ENCODE measurements at regions of chr5 and their contacts with region 1.

Region 1: DNA sequence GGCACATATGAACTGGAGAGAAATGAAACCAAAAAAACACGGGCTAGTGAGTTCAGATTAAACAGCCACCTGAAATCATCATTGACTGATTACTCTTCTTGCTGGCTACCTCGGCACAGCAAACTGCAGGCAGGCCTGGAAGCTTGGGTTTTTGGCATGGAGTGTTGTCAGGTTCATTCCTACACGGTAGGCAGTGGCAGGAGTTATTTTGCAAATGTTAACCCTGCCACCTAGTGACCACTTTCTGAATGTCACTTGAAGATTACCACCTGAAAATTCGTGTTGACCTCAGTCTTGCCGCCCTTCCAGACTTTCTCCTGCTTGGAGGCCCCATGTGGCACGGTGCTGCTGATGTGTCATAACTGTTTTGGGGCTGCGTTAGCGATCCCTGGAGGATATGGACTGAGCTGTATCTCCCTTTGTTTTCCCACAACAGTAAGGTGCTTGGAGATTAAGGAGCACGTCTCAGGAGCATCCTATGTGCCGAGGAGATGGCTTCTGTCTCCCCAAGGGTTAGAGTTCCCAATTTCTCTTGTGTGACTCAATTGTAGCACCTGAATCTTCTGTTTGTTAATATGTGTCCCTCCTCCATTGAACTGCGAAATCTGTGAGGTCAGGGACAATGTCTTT is 12.7 kb upstream of the CD180 start:
- DNase-seq: peak; percentile 69 to 78 (median 74)
- H3K4me3 ChIP-seq: no peak overlapping the region
- H3K4me3 Mint-ChIP-seq: peak overlapping the region in 4 of 8 donors; percentile 38 to 63 (median 61)
- H3K27ac ChIP-seq: no peak overlapping the region
- H3K27ac Mint-ChIP-seq: peak overlapping the region; percentile 72 to 93 (median 83)
- H3K4me1 ChIP-seq: peaks cover 55% of the 10 kb centered on the region
- H3K4me1 Mint-ChIP-seq: peaks cover 54 to 62% (median 58%) of the 10 kb centered on the region in 4 donors
- H3K27me3 ChIP-seq: no peaks in the 10 kb centered on the region
- H3K27me3 Mint-ChIP-seq: no peaks in the 10 kb centered on the region

Region 2: GRCh38 chr5:65364907-65365306 is 1844.3 kb before region 1 on chr5:
- CTCF ChIA-PET with region 1: no interaction called
- POLR2A ChIA-PET with region 1: no interaction called
- intact Hi-C with region 1: no loop called
- DNase-seq: no peak
- H3K4me3 ChIP-seq: no peak overlapping the region
- H3K4me3 Mint-ChIP-seq: no peak overlapping the region
- H3K27ac ChIP-seq: no peak overlapping the region
- H3K27ac Mint-ChIP-seq: no peak overlapping the region
- H3K4me1 ChIP-seq: no peaks in the 10 kb centered on the region
- H3K4me1 Mint-ChIP-seq: no peaks in the 10 kb centered on the region
- H3K27me3 ChIP-seq: no peaks in the 10 kb centered on the region
- H3K27me3 Mint-ChIP-seq: no peaks in the 10 kb centered on the region

Region 3: GRCh38 chr5:66171349-66172344 is 1037.6 kb before region 1 on chr5:
- CTCF ChIA-PET with region 1: no interaction called
- POLR2A ChIA-PET with region 1: no interaction called
- intact Hi-C with region 1: loop called (anchors 2 kb)
- DNase-seq: peak; percentile 68 to 81 (median 78)
- H3K4me3 ChIP-seq: no peak overlapping the region
- H3K4me3 Mint-ChIP-seq: peak overlapping the region in 3 of 8 donors; percentile 18 to 53 (median 26)
- H3K27ac ChIP-seq: peak overlapping the region; percentile 43
- H3K27ac Mint-ChIP-seq: peak overlapping the region; percentile 86 to 96 (median 90)
- H3K4me1 ChIP-seq: peaks cover 14% of the 10 kb centered on the region
- H3K4me1 Mint-ChIP-seq: peaks cover 18 to 33% (median 20%) of the 10 kb centered on the region in 4 donors
- H3K27me3 ChIP-seq: no peaks in the 10 kb centered on the region
- H3K27me3 Mint-ChIP-seq: no peaks in the 10 kb centered on the region

Region 4: DNA sequence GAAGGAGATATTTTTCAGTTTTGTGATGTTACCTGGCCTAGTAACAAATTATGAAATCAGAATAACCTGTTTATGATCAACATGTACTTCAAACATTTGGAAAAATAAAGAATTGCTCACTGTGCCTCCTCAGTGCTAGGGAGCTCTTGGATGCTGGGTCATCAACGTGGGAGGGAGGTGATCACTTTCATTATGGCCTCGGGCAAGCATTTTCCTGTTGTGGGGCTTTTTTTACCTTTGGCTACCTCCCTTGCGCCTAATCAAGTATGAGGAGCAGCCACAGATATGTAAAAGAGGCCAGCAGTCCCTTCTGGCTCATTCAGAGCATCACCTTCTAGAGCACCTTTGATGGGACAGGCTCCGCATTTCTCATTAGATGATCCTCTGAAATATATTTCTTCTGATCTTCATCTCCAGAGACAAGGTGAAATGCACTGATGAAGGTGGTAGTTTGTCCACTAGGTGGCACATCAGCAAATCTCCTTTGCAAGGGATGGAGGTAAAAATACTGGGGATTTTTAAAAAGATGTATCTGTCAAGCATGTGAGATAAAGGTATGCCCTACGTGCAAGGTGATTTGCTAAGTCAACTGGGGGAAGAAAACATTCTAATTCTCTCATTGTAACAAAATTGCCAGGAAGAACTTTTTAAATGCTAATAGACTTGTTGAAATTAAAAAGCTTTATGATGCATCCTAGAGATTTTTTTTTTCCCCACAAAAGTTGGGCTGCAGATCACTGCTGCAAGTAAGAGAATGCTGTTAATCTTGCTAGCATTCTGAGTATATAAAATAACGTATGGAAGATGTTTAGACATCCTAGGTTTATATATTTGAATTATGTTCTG is 394.9 kb before region 1 on chr5:
- CTCF ChIA-PET with region 1: interaction called, 9 read pairs
- POLR2A ChIA-PET with region 1: no interaction called
- intact Hi-C with region 1: loop called (anchors 1 kb)
- DNase-seq: peak in 4 of 5 donors; percentile 42 to 51 (median 47)
- H3K4me3 ChIP-seq: no peak overlapping the region
- H3K4me3 Mint-ChIP-seq: peak overlapping the region in 2 of 8 donors; percentile 22 to 27
- H3K27ac ChIP-seq: no peak overlapping the region
- H3K27ac Mint-ChIP-seq: no peak overlapping the region
- H3K4me1 ChIP-seq: no peaks in the 10 kb centered on the region
- H3K4me1 Mint-ChIP-seq: peaks cover 0 to 9% (median 2%) of the 10 kb centered on the region in 4 donors
- H3K27me3 ChIP-seq: no peaks in the 10 kb centered on the region
- H3K27me3 Mint-ChIP-seq: peaks cover 5 to 8% of the 10 kb centered on the region in 2 donors

Region 5: DNA sequence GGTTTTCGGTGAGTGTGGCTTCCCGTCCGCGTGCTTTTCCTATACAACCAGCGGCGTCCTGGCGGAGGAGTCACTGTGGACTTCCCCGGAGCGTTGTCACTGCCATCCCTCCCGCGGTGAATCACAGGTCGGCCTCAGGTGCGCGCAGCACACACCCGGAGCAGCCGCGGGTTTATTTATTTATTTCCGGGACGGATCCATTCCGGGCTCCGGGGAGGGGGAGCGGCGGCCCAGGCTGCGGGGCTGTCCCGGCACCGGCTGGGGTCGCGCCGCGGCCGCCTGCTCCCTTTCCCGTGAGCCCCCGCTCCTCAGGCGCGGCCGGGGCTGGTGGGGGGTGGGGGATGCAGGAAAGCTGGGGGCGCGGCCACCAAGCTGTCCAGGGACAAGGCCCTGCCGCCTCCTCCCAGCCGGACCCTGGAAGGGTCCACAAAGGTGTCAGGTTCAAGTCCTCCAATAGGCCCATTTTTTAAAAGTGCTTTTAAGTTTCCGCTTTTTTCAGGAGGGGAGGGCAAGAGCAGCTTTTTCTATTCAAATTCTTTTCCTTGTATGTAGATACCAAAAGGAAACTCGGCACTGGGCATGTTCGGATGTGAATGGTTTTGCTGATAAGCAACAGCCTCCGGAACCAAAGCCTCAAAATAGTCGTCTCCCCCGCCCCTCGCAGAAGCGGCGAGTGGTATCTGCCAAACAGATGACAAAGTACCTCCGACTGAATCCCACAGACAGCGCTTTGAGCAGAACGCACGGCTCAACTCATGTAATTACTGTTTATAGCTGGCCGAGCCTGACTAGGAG is 205.1 kb before region 1 on chr5:
- CTCF ChIA-PET with region 1: interaction called, 3 read pairs
- POLR2A ChIA-PET with region 1: interaction called, 8 read pairs
- intact Hi-C with region 1: loop called (anchors 1 kb)
- DNase-seq: peak; percentile 88 to 96 (median 90)
- H3K4me3 ChIP-seq: peak overlapping the region; percentile 81 to 83
- H3K4me3 Mint-ChIP-seq: peak overlapping the region; percentile 89 to 99 (median 98)
- H3K27ac ChIP-seq: peak overlapping the region; percentile 82
- H3K27ac Mint-ChIP-seq: peak overlapping the region; percentile 95 to 99 (median 98)
- H3K4me1 ChIP-seq: peaks cover 55% of the 10 kb centered on the region
- H3K4me1 Mint-ChIP-seq: peaks cover 40 to 58% (median 50%) of the 10 kb centered on the region in 4 donors
- H3K27me3 ChIP-seq: no peaks in the 10 kb centered on the region
- H3K27me3 Mint-ChIP-seq: no peaks in the 10 kb centered on the region

Region 6: DNA sequence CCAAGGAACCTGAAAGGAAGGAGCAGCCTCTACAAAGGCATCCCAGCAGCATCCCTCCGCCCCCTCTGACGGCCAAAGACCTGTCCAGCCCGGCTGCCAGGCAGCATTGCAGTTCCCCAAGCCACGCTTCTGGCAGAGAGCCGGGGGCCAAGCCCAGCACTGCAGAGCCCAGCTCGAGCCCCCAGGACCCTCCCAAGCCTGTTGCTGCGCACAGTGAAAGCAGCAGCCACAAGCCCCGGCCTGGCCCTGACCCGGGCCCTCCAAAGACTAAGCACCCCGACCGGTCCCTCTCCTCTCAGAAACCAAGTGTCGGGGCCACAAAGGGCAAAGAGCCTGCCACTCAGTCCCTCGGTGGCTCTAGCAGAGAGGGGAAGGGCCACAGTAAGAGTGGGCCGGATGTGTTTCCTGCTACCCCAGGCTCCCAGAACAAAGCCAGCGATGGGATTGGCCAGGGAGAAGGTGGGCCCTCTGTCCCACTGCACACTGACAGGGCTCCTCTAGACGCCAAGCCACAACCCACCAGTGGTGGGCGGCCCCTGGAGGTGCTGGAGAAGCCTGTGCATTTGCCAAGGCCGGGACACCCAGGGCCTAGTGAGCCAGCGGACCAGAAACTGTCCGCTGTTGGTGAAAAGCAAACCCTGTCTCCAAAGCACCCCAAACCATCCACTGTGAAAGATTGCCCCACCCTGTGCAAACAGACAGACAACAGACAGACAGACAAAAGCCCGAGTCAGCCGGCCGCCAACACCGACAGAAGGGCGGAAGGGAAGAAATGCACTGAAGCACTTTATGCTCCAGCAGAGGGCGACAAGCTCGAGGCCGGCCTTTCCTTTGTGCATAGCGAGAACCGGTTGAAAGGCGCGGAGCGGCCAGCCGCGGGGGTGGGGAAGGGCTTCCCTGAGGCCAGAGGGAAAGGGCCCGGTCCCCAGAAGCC is 43.5 kb before region 1 on chr5:
- CTCF ChIA-PET with region 1: interaction called, 851 read pairs
- POLR2A ChIA-PET with region 1: interaction called, 703 read pairs
- intact Hi-C with region 1: loop called (anchors 1 kb)
- DNase-seq: peak; percentile 80 to 86 (median 81)
- H3K4me3 ChIP-seq: peak overlapping the region; percentile 65 to 66
- H3K4me3 Mint-ChIP-seq: peak overlapping the region; percentile 89 to 96 (median 92)
- H3K27ac ChIP-seq: peak overlapping the region; percentile 86
- H3K27ac Mint-ChIP-seq: peak overlapping the region in 6 of 7 donors; percentile 97 to 98 (median 97)
- H3K4me1 ChIP-seq: peaks cover 94% of the 10 kb centered on the region
- H3K4me1 Mint-ChIP-seq: peaks cover 47 to 80% (median 65%) of the 10 kb centered on the region in 4 donors
- H3K27me3 ChIP-seq: no peaks in the 10 kb centered on the region
- H3K27me3 Mint-ChIP-seq: no peaks in the 10 kb centered on the region

Region 7: DNA sequence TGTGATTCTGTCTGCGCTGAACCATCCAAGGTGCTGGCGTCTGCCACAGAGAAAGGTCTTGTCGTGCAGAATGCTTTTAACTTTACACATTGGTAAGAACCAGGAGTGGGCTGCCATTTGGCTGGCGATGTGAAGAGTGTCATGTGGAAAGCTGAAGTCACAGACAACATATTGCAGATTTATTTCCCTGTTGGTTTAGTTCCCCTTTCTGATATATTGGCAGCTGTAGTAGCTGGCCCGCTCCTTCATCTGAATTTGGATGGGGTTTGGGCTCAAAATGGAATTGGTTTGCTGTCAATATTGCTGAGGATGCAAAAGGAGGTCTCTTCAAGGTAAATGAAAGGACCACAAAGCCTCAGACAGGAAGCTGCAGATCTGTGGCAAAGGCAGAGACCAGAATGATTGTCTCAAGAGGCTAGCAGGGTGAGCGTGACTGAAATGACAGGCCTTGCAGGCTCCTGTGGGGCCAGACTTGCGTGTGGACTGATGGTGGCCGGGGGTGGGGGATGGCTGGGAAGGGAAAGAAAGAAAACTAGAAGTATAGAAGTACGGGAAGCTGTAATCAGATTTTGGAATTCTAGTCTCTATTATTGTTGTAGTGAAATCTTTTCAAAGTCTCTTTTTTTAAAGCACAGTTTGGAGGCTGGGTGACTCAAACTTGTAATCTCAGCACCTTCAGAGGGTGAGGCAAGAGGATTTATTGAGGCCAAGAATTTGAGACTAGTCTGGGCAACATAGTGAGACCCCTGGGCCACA is 12.4 kb after region 1 on chr5:
- CTCF ChIA-PET with region 1: interaction called, 23 read pairs
- POLR2A ChIA-PET with region 1: interaction called, 17 read pairs
- intact Hi-C with region 1: no loop called
- DNase-seq: peak; percentile 55 to 74 (median 63)
- H3K4me3 ChIP-seq: peak overlapping the region in 1 of 2 donors; percentile 6
- H3K4me3 Mint-ChIP-seq: peak overlapping the region in 7 of 8 donors; percentile 64 to 85 (median 75)
- H3K27ac ChIP-seq: peak overlapping the region; percentile 36
- H3K27ac Mint-ChIP-seq: peak overlapping the region; percentile 88 to 96 (median 94)
- H3K4me1 ChIP-seq: peaks cover 67% of the 10 kb centered on the region
- H3K4me1 Mint-ChIP-seq: peaks cover 57 to 81% (median 64%) of the 10 kb centered on the region in 4 donors
- H3K27me3 ChIP-seq: no peaks in the 10 kb centered on the region
- H3K27me3 Mint-ChIP-seq: no peaks in the 10 kb centered on the region

Region 8: DNA sequence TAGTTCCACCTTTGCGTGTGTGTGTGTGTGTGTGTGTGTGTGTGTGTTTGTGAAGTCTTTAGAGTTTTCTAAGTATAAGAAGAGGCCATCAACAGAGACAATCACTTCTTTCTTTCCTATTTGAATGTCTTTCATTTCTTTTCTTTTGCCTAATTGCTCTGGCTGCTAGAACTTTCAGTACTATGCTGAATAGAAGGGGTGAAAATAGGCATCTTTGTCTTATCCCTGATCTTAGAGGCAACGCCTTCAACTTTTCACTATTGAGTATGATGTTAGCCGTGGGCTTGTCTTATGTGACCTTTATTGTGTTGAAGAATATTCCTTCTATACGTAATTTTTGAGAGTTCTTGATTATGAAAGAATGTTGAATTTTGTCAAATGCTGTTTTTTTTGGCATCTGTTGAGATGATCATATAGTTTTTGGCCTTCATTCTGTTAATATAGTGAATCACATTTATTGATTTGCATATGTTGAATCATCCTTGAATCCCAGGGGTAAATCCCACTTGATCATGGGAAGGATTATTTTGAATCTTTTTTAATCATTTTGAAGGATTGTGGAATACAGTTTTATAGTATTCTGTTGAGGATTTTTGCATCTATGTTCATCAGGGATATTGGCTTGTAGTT is 122.2 kb after region 1 on chr5:
- CTCF ChIA-PET with region 1: no interaction called
- POLR2A ChIA-PET with region 1: no interaction called
- intact Hi-C with region 1: no loop called
- DNase-seq: no peak
- H3K4me3 ChIP-seq: no peak overlapping the region
- H3K4me3 Mint-ChIP-seq: no peak overlapping the region
- H3K27ac ChIP-seq: no peak overlapping the region
- H3K27ac Mint-ChIP-seq: no peak overlapping the region
- H3K4me1 ChIP-seq: no peaks in the 10 kb centered on the region
- H3K4me1 Mint-ChIP-seq: no peaks in the 10 kb centered on the region
- H3K27me3 ChIP-seq: no peaks in the 10 kb centered on the region
- H3K27me3 Mint-ChIP-seq: peaks cover 0 to 2% of the 10 kb centered on the region in 2 donors

Region 9: GRCh38 chr5:67375608-67376007 is 166.4 kb after region 1 on chr5:
- CTCF ChIA-PET with region 1: no interaction called
- POLR2A ChIA-PET with region 1: no interaction called
- intact Hi-C with region 1: no loop called
- DNase-seq: no peak
- H3K4me3 ChIP-seq: no peak overlapping the region
- H3K4me3 Mint-ChIP-seq: no peak overlapping the region
- H3K27ac ChIP-seq: no peak overlapping the region
- H3K27ac Mint-ChIP-seq: no peak overlapping the region
- H3K4me1 ChIP-seq: no peaks in the 10 kb centered on the region
- H3K4me1 Mint-ChIP-seq: peaks cover 0 to 8% (median 0%) of the 10 kb centered on the region in 4 donors
- H3K27me3 ChIP-seq: no peaks in the 10 kb centered on the region
- H3K27me3 Mint-ChIP-seq: no peaks in the 10 kb centered on the region

Measured in CD4-positive, alpha-beta memory T cell (primary cell).